ENCODE measurements at regions of chr17 and their contacts with region 1.

Region 1: GRCh38 chr17:31437720-31438420 is 46.4 kb downstream of the RAB11FIP4 start:
- DNase-seq: no peak
- ATAC-seq: no peak
- H3K4me3 ChIP-seq: no peak overlapping the region
- H3K4me3 Mint-ChIP-seq: no peak overlapping the region
- H3K27ac ChIP-seq: no peak overlapping the region
- H3K27ac Mint-ChIP-seq: no peak overlapping the region
- H3K4me1 ChIP-seq: peaks cover 8% of the 10 kb centered on the region in 2 donors
- H3K4me1 Mint-ChIP-seq: peaks cover 0 to 17% (median 15%) of the 10 kb centered on the region in 7 donors
- H3K27me3 ChIP-seq: no peaks in the 10 kb centered on the region
- H3K27me3 Mint-ChIP-seq: peaks cover 0 to 13% (median 0%) of the 10 kb centered on the region in 5 donors

Region 2: GRCh38 chr17:31388770-31389661 is 48.9 kb before region 1 on chr17:
- CTCF ChIA-PET with region 1: interaction called, 3 read pairs
- POLR2A ChIA-PET with region 1: no interaction called
- intact Hi-C with region 1: loop called in 1 of 2 experiments (anchors 2 kb)
- DNase-seq: peak in 7 of 9 donors; percentile 15 to 52 (median 38)
- ATAC-seq: peak; percentile 67
- H3K4me3 ChIP-seq: no peak overlapping the region
- H3K4me3 Mint-ChIP-seq: peak overlapping the region in 2 of 10 donors; percentile 21 to 56
- H3K27ac ChIP-seq: no peak overlapping the region
- H3K27ac Mint-ChIP-seq: no peak overlapping the region
- H3K4me1 ChIP-seq: no peaks in the 10 kb centered on the region
- H3K4me1 Mint-ChIP-seq: peaks cover 10 to 17% (median 16%) of the 10 kb centered on the region in 7 donors
- H3K27me3 ChIP-seq: no peaks in the 10 kb centered on the region
- H3K27me3 Mint-ChIP-seq: peaks cover 22 to 50% (median 28%) of the 10 kb centered on the region in 5 donors

Measured in naive thymus-derived CD4-positive, alpha-beta T cell (primary cell).